Body of pancreas (tissue), 4 donors: ENCODE measurements at regions of chr1 and their contacts with region 1.

Region 1: GRCh38 chr1:219066631-219067349 is 106.9 kb upstream of the LYPLAL1 start:
- DNase-seq: no peak
- ATAC-seq: peak; percentile 72
- H3K4me3 ChIP-seq: no peak overlapping the region
- H3K27ac ChIP-seq: no peak overlapping the region
- H3K4me1 ChIP-seq: no peaks in the 10 kb centered on the region
- H3K27me3 ChIP-seq: no peaks in the 10 kb centered on the region
- CTCF ChIP-seq: peak in 6 of 7 experiments; percentile 9 to 66 (median 54)
- POLR2A ChIP-seq: no peak

Region 2: GRCh38 chr1:218330043-218330623 is 736.7 kb before region 1 on chr1:
- intact Hi-C with region 1: loop called (anchors 10 kb)
- DNase-seq: no peak
- ATAC-seq: peak; percentile 62
- H3K4me3 ChIP-seq: no peak overlapping the region
- H3K27ac ChIP-seq: no peak overlapping the region
- H3K4me1 ChIP-seq: no peaks in the 10 kb centered on the region
- H3K27me3 ChIP-seq: no peaks in the 10 kb centered on the region
- CTCF ChIP-seq: peak; percentile 31 to 84 (median 77)
- POLR2A ChIP-seq: no peak

Region 3: DNA sequence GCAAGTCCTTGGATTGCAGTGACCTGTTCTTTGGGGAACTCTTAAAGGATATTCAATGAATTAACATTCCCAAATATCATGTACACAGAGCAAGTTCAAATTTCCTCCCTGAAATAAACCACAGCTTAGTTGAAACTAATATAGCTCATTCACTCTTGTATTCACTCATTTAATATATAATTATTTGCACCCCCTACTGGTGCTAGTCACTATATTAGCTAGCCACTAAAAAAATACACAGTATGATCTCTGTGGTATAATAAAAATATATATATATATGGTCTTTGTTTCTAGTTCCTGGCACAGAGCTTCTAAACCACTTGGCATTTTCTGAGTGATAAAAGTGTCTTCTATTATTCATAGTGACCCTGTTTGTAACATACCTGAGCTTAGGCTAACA is 70.4 kb before region 1 on chr1:
- intact Hi-C with region 1: no loop called
- DNase-seq: no peak
- ATAC-seq: no peak
- H3K4me3 ChIP-seq: no peak overlapping the region
- H3K27ac ChIP-seq: no peak overlapping the region
- H3K4me1 ChIP-seq: no peaks in the 10 kb centered on the region
- H3K27me3 ChIP-seq: no peaks in the 10 kb centered on the region
- CTCF ChIP-seq: peak in 1 of 7 experiments; percentile 5
- POLR2A ChIP-seq: no peak